ENCODE measurements at regions of chr2 and their contacts with region 1.

Region 1: DNA sequence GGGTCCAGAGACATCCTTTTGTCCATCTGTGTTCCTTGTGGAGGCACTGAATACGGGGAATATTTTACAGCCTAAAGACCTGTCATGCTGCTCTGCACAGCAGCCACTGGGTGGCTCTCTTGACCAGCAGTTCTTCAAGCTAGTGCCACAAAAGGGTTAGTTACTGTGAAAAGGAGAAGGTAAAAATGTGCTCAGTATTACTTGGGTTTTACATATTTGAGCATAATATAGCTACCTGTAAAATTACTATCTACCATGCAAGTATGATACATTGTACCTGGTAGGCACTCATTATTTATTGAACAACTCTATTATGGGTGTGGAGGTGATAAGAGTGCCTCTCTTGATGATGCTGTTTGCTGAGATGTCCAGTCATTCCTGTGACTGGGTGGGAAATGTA is 23.6 kb downstream of the FZD5 start:
- H3K4me3 Mint-ChIP-seq: no peak overlapping the region
- H3K27ac Mint-ChIP-seq: no peak overlapping the region
- H3K4me1 Mint-ChIP-seq: peaks cover 8% of the 10 kb centered on the region
- H3K27me3 Mint-ChIP-seq: no peaks in the 10 kb centered on the region

Region 2: GRCh38 chr2:207408086-207408794 is 337.9 kb before region 1 on chr2:
- intact Hi-C with region 1: no loop called
- H3K4me3 Mint-ChIP-seq: no peak overlapping the region
- H3K27ac Mint-ChIP-seq: no peak overlapping the region
- H3K4me1 Mint-ChIP-seq: no peaks in the 10 kb centered on the region
- H3K27me3 Mint-ChIP-seq: no peaks in the 10 kb centered on the region

Region 3: GRCh38 chr2:207974216-207974605 is 228.1 kb after region 1 on chr2:
- intact Hi-C with region 1: loop called (anchors 5 kb)
- H3K4me3 Mint-ChIP-seq: no peak overlapping the region
- H3K27ac Mint-ChIP-seq: no peak overlapping the region
- H3K4me1 Mint-ChIP-seq: peaks cover 21% of the 10 kb centered on the region
- H3K27me3 Mint-ChIP-seq: no peaks in the 10 kb centered on the region

Region 4: DNA sequence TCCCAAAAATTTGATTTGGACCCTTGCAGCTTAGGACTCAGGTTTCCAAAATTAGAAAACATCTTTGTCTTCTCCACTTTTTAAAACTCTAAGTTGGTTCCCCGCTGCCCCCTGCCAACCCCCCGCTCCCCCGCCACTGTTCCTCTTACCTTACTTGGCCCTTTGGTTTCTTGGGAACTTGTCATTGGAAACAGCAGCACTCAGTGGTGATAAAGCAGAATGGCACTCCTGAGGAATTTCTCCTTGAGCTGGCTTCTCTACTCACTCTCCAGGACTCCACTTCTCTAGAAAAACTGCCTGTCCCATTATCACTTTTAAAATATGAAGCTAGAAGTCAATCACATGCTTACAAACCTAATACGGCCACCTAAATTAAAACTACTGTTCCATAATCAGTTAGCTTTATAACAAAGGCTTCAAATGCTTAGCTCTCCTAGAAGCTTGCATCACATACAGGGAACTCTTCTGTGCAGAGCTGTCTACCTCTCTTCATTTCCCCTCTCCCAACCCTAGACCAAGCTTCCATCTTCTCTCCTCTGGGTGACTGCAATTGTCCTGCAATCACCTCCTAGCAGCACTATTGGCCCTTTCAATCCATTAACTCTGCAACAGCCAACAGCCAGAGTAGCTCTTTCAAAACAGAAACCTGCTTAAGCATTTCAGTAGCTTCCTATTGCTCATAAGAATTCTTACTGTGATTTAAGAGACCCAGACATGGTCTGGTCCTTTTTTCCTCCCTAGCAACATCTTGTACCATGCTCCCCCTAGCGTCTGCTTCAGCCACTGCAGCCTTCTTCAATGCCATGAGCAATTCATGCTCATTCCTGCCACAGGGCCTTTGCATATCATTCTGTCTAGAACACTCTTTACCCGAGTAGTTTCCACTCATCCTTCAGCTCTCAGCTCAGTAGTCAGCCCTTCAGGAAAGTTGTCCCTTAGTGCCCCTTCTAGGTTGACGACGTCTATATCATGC is 294.4 kb after region 1 on chr2:
- intact Hi-C with region 1: loop called (anchors 1 kb)
- H3K4me3 Mint-ChIP-seq: no peak overlapping the region
- H3K27ac Mint-ChIP-seq: no peak overlapping the region
- H3K4me1 Mint-ChIP-seq: peaks cover 9% of the 10 kb centered on the region
- H3K27me3 Mint-ChIP-seq: no peaks in the 10 kb centered on the region

Region 5: GRCh38 chr2:208072250-208072892 is 326.2 kb after region 1 on chr2:
- intact Hi-C with region 1: loop called (anchors 1 kb)
- H3K4me3 Mint-ChIP-seq: no peak overlapping the region
- H3K27ac Mint-ChIP-seq: no peak overlapping the region
- H3K4me1 Mint-ChIP-seq: peaks cover 6% of the 10 kb centered on the region
- H3K27me3 Mint-ChIP-seq: no peaks in the 10 kb centered on the region

Region 6: GRCh38 chr2:208608127-208608806 is 862.1 kb after region 1 on chr2:
- intact Hi-C with region 1: no loop called
- H3K4me3 Mint-ChIP-seq: no peak overlapping the region
- H3K27ac Mint-ChIP-seq: no peak overlapping the region
- H3K4me1 Mint-ChIP-seq: no peaks in the 10 kb centered on the region
- H3K27me3 Mint-ChIP-seq: no peaks in the 10 kb centered on the region

Measured in dendritic cell treated with granulocyte-macrophage colony-stimulating factor and Interleukin-4, amounts not matched to agents 40 ng/mL and 50 ng/mL, for 4 days (primary cell).